Activated CD4-positive, alpha-beta memory T cell treated with anti-CD3 and anti-CD28 coated beads, Interleukin-2, amount 10 ng/mL, durations not matched to agents 7 days and 5 days (primary cell): ENCODE measurements at regions of chr5 and their contacts with region 1.

Region 1: GRCh38 chr5:180704368-180704869 is 35.4 kb downstream of the OR2Y1 start:
- DNase-seq: no peak
- H3K4me3 Mint-ChIP-seq: no peak overlapping the region
- H3K27ac Mint-ChIP-seq: no peak overlapping the region
- H3K4me1 Mint-ChIP-seq: no peaks in the 10 kb centered on the region
- H3K27me3 Mint-ChIP-seq: peaks cover 3% of the 10 kb centered on the region

Region 2: GRCh38 chr5:180631509-180632395 is 72.7 kb before region 1 on chr5:
- CTCF ChIA-PET with region 1: no interaction called
- POLR2A ChIA-PET with region 1: no interaction called
- DNase-seq: no peak
- H3K4me3 Mint-ChIP-seq: no peak overlapping the region
- H3K27ac Mint-ChIP-seq: no peak overlapping the region
- H3K4me1 Mint-ChIP-seq: no peaks in the 10 kb centered on the region
- H3K27me3 Mint-ChIP-seq: no peaks in the 10 kb centered on the region

Region 3: GRCh38 chr5:180718810-180719453 is 14.5 kb after region 1 on chr5:
- CTCF ChIA-PET with region 1: interaction called, 12 read pairs
- POLR2A ChIA-PET with region 1: no interaction called
- DNase-seq: peak; percentile 29
- H3K4me3 Mint-ChIP-seq: no peak overlapping the region
- H3K27ac Mint-ChIP-seq: no peak overlapping the region
- H3K4me1 Mint-ChIP-seq: peaks cover 26% of the 10 kb centered on the region
- H3K27me3 Mint-ChIP-seq: peaks cover 17% of the 10 kb centered on the region

Region 4: DNA sequence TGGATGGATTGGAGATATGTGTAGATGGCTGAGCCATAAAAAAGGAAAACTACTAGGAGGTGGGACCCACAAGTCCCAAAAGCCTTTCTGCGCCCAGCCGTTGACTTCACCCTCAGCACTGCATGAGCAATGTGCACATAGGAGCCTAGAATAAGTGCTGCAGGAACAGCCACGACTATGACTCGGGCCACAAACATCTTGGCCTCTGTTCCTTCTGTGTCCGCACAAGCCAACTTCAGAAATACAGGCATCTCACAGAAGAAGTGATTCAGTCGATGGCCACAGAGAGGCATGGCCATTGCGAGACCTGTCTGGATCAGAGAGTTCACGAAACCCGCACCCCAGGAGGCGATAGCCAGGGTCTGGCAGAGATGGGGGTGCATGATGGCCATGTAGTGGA is 34.9 kb after region 1 on chr5:
- CTCF ChIA-PET with region 1: no interaction called
- POLR2A ChIA-PET with region 1: no interaction called
- DNase-seq: no peak
- H3K4me3 Mint-ChIP-seq: no peak overlapping the region
- H3K27ac Mint-ChIP-seq: no peak overlapping the region
- H3K4me1 Mint-ChIP-seq: no peaks in the 10 kb centered on the region
- H3K27me3 Mint-ChIP-seq: peaks cover 12% of the 10 kb centered on the region

Region 5: GRCh38 chr5:180825768-180826525 is 121.5 kb after region 1 on chr5:
- CTCF ChIA-PET with region 1: no interaction called
- POLR2A ChIA-PET with region 1: no interaction called
- DNase-seq: no peak
- H3K4me3 Mint-ChIP-seq: no peak overlapping the region
- H3K27ac Mint-ChIP-seq: no peak overlapping the region
- H3K4me1 Mint-ChIP-seq: peaks cover 31% of the 10 kb centered on the region
- H3K27me3 Mint-ChIP-seq: no peaks in the 10 kb centered on the region